ENCODE measurements at regions of chr1 and their contacts with region 1.

Region 1: GRCh38 chr1:6646499-6647148 is 22.0 kb downstream of the THAP3 start:
- DNase-seq: no peak
- ATAC-seq: peak; percentile 56 to 58
- H3K4me3 ChIP-seq: no peak overlapping the region
- H3K27ac ChIP-seq: no peak overlapping the region
- H3K4me1 ChIP-seq: no peaks in the 10 kb centered on the region
- H3K27me3 ChIP-seq: no peaks in the 10 kb centered on the region

Region 2: DNA sequence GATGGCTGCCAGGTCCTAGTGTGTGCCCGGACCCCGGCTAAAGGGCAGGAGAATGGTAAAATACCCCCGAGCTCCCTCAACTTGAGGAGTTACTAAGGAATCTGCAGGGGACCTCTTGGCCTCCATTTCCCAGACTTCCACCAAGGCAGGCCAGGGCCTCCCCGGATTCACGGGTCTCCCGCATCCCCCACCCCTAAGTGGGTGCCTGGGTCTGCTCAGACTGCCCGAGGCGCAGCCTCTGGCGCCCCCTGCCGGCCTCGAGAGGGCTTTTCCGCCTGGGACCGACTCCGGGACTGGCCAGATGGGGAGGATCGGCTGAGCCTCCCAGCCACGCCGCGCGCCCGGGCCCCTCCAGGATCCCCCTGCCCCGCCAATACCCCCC is 156.8 kb before region 1 on chr1:
- intact Hi-C with region 1: loop called in 2 of 4 experiments (anchors 5 kb)
- DNase-seq: peak; percentile 73 to 89 (median 85)
- ATAC-seq: peak; percentile 63 to 71
- H3K4me3 ChIP-seq: peak overlapping the region; percentile 77
- H3K27ac ChIP-seq: no peak overlapping the region
- H3K4me1 ChIP-seq: no peaks in the 10 kb centered on the region
- H3K27me3 ChIP-seq: no peaks in the 10 kb centered on the region

Region 3: GRCh38 chr1:6554031-6554906 is 92.4 kb before region 1 on chr1 and contains the start of gene NOL9:
- intact Hi-C with region 1: loop called in 1 of 4 experiments (anchors 5 kb)
- DNase-seq: peak; percentile 95 to 99 (median 98)
- ATAC-seq: peak; percentile 97
- H3K4me3 ChIP-seq: peak within 1 kb of the TSS; percentile 82
- H3K27ac ChIP-seq: peak within 1 kb of the TSS; percentile 54
- H3K4me1 ChIP-seq: peaks cover 2% of the 10 kb centered on the region
- H3K27me3 ChIP-seq: no peaks in the 10 kb centered on the region
- total RNA-seq, gene NOL9: 12.8 to 17.1 (median 15.6) TPM